Activated CD4-positive, alpha-beta T cell treated with anti-CD3 and anti-CD28 coated beads, Interleukin-2, amount 10 ng/mL, durations not matched to agents 24 days and 14 days (primary cell): ENCODE measurements at regions of chr5 and their contacts with region 1.

Region 1: DNA sequence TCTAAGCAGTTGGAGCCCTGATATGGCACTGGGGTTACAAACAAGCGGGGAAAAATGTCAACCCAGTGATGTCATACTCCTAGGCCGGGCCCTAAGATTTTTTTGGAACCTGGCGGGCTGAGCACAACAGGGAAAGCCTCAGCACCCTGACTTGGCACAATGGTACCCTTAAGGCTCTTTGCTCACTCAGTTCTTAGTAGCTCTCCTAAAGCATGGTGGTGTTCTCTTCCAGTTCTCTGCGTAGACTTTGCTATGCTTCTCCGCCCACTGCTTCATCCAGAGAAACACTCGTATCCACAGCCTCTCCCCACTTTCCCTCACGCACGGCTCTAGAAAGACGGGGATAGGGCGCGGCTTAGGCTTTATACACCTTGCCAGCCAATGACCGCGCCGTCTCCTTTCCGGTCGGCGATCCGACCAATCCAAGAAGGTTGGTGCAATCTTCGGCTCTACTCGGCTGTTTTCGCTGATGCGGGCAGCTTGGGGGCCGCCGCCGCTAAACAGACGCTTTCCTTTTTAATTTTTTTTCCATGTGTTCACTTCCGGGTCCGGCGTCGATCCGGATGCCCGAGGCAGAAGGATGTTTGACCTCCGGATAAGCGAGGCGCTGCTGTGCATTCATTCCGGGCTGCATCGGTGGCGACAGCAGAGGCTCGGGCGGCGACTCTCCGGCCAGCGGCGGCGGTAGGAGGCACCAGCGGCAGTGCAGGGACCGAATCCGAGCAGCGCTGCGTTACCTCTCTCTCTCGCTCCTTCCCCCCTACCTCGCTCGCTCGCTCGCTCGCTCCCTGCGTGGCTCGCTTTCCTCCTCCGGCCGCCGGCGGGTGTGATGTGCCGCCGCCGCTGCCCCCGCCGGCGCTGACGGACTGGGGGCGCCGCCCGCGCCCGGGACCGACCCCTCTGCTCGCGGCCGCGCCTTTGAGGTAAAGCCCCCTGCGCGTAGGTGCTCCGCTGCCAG is at the start of gene CSNK1G3:
- DNase-seq: peak; percentile 97
- H3K4me3 Mint-ChIP-seq: peak within 1 kb of the TSS; percentile 90
- H3K27ac Mint-ChIP-seq: peak within 1 kb of the TSS; percentile 99
- H3K4me1 Mint-ChIP-seq: peaks cover 35% of the 10 kb centered on the region
- H3K27me3 Mint-ChIP-seq: peaks cover 11% of the 10 kb centered on the region
- total RNA-seq, gene CSNK1G3: 36.6 and 40.0 TPM in 2 replicates

Region 2: DNA sequence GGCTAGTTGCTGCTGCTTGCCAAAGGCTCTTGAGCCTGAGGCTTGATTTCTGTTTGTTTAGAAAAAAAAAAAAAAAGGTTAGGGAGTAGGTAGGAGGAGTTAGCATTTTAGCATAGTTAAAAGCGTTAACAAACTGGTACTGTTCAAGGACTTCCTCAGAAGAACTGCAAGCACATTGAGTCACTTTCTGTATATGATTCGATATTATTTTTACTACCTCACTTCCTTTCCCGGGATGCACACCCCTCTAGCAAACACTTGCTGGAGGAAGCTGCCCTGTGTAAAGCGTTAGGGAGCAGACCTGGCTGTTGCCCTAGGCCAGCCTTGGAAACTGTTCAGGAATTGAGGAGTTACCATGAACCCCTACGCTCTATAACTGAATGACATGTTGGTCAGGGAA is 73.0 kb before region 1 on chr5:
- intact Hi-C with region 1: loop called (anchors 1 kb)
- DNase-seq: peak; percentile 78
- H3K4me3 Mint-ChIP-seq: peak overlapping the region; percentile 32
- H3K27ac Mint-ChIP-seq: peak overlapping the region; percentile 87
- H3K4me1 Mint-ChIP-seq: peaks cover 27% of the 10 kb centered on the region
- H3K27me3 Mint-ChIP-seq: no peaks in the 10 kb centered on the region

Region 3: GRCh38 chr5:123448017-123448617 is 63.8 kb before region 1 on chr5:
- intact Hi-C with region 1: loop called (anchors 1 kb)
- DNase-seq: peak; percentile 81
- H3K4me3 Mint-ChIP-seq: peak overlapping the region; percentile 36
- H3K27ac Mint-ChIP-seq: peak overlapping the region; percentile 83
- H3K4me1 Mint-ChIP-seq: peaks cover 35% of the 10 kb centered on the region
- H3K27me3 Mint-ChIP-seq: peaks cover 10% of the 10 kb centered on the region

Region 4: DNA sequence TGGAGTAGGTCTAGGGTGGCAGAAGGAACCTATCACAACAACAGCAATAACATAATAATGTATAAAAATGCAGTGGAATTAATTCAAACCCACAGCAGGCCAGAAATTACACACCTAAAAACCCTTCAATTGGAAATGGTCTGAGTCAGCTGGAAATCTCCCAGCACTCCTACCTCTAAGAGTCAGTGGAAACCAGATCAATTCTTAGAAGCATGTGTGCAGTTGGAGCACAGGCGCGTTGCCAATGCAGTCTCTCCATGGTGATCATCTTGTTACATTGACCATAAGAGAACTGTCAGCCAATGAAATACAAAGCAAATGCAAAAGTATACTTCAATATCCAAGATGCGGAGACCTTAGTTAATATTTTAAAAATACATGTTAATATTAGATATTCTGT is 15.0 kb before region 1 on chr5:
- intact Hi-C with region 1: no loop called
- DNase-seq: no peak
- H3K4me3 Mint-ChIP-seq: no peak overlapping the region
- H3K27ac Mint-ChIP-seq: no peak overlapping the region
- H3K4me1 Mint-ChIP-seq: no peaks in the 10 kb centered on the region
- H3K27me3 Mint-ChIP-seq: peaks cover 15% of the 10 kb centered on the region

Region 5: DNA sequence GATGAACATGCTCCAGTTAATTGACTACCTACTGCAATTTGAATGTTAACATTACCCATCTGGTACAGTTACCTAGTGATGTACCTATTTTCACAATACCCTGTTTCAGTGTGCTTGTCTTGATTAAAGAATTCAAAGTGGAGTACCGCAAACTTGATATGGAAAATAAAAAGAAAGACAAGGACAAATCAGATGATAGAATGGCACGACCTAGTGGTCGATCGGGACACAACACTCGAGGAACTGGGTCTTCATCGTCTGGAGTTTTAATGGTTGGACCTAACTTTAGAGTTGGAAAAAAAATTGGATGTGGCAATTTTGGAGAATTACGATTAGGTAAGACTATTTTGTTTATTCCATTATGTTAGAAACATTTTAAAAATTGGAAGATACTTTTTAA is 33.6 kb after region 1 on chr5:
- intact Hi-C with region 1: loop called (anchors 1 kb)
- DNase-seq: no peak
- H3K4me3 Mint-ChIP-seq: no peak overlapping the region
- H3K27ac Mint-ChIP-seq: no peak overlapping the region
- H3K4me1 Mint-ChIP-seq: peaks cover 41% of the 10 kb centered on the region
- H3K27me3 Mint-ChIP-seq: no peaks in the 10 kb centered on the region

Region 6: GRCh38 chr5:124274949-124275348 is 763.0 kb after region 1 on chr5:
- intact Hi-C with region 1: no loop called
- DNase-seq: no peak
- H3K4me3 Mint-ChIP-seq: no peak overlapping the region
- H3K27ac Mint-ChIP-seq: no peak overlapping the region
- H3K4me1 Mint-ChIP-seq: no peaks in the 10 kb centered on the region
- H3K27me3 Mint-ChIP-seq: no peaks in the 10 kb centered on the region